CD4-positive, alpha-beta memory T cell (primary cell): ENCODE measurements at regions of chr1 and their contacts with region 1.

Region 1: DNA sequence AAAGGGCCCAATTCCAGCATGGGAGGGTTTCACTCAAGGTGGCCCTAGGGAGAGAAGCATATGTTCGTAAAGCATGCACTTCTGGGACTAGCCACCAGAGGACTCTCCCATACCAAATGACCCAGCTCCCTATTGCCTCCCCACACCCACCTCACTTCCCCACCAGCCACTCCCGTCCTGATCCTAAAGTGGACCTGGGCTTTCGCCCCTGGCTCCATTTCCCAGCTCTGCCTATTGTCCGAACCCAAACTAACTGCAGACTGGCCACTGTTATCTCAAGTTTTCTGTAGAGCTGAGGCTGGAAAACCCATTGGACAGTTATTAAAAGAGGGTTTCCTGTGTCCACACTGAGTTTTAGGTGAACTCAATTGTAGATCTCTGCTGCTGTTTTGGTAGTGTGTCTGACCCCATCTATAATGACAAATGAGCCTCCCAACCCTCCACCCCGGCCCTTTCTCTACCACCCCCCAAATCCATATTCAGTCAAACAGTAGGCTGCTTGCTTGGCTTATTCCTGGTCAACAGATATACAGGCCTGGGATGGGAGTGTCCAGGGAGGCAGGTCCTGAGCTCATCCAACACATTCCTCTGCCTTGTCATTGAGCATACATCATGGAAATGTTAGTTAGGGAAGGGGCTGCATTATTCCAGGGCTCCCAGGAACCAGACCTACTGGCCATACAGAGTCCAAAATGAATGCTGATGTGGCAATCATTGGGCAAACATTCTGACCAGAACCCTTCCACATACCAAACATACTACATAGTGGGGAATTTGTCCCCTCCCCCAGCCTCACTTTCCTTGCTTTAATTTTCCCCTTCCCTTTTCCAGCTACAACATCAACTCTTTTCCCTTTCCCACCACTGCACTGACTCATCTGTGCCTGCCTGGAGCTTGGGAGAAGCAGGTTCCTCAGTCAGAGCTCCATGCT is 59.2 kb downstream of the ABCA4 start:
- DNase-seq: peak in 1 of 5 donors; percentile 8
- H3K4me3 ChIP-seq: no peak overlapping the region
- H3K4me3 Mint-ChIP-seq: no peak overlapping the region
- H3K27ac ChIP-seq: no peak overlapping the region
- H3K27ac Mint-ChIP-seq: no peak overlapping the region
- H3K4me1 ChIP-seq: no peaks in the 10 kb centered on the region
- H3K4me1 Mint-ChIP-seq: no peaks in the 10 kb centered on the region
- H3K27me3 ChIP-seq: no peaks in the 10 kb centered on the region
- H3K27me3 Mint-ChIP-seq: peaks cover 15 to 17% of the 10 kb centered on the region in 2 donors

Region 2: DNA sequence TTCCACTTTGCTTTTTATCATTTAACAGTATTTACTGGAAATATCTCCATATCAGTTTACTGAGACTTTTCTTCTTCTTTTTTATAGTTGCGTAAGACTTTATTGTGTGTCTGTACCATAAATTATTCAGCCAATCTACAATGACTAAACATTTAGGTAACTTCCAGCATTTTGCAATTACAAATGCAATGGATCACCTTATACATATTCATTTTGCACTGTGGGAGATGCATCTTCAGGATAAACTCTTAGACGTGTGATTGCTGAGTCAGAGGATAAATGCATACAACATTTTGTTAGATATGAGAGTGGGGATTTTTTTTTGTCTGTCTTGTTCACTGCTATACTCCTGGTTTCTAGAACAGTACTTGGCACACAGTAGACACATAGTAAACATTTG is 56.9 kb before region 1 on chr1:
- CTCF ChIA-PET with region 1: no interaction called
- POLR2A ChIA-PET with region 1: no interaction called
- intact Hi-C with region 1: no loop called
- DNase-seq: no peak
- H3K4me3 ChIP-seq: no peak overlapping the region
- H3K4me3 Mint-ChIP-seq: no peak overlapping the region
- H3K27ac ChIP-seq: no peak overlapping the region
- H3K27ac Mint-ChIP-seq: no peak overlapping the region
- H3K4me1 ChIP-seq: no peaks in the 10 kb centered on the region
- H3K4me1 Mint-ChIP-seq: no peaks in the 10 kb centered on the region
- H3K27me3 ChIP-seq: no peaks in the 10 kb centered on the region
- H3K27me3 Mint-ChIP-seq: peaks cover 9 to 20% of the 10 kb centered on the region in 2 donors

Region 3: DNA sequence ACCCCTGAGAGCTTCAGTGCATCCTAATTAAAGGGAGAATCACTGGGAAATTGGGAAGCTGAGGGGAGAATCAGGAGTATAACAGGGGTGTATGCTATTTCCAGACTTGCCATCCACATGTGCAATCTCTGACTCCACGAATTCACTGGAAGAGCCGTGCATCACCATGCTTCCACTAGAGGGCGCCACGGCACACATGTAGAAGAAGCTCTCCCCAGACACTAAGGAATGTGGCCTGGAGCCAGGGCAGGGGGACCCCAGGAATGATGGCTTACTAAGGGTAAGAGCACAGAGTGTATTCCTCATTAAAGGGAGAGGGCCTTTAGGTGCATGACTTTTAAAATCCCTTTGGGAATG is 22.3 kb before region 1 on chr1:
- CTCF ChIA-PET with region 1: interaction called, 11 read pairs
- POLR2A ChIA-PET with region 1: no interaction called
- intact Hi-C with region 1: no loop called
- DNase-seq: peak in 4 of 5 donors; percentile 22 to 37 (median 25)
- H3K4me3 ChIP-seq: no peak overlapping the region
- H3K4me3 Mint-ChIP-seq: no peak overlapping the region
- H3K27ac ChIP-seq: no peak overlapping the region
- H3K27ac Mint-ChIP-seq: no peak overlapping the region
- H3K4me1 ChIP-seq: no peaks in the 10 kb centered on the region
- H3K4me1 Mint-ChIP-seq: peaks cover 0 to 2% (median 0%) of the 10 kb centered on the region in 4 donors
- H3K27me3 ChIP-seq: no peaks in the 10 kb centered on the region
- H3K27me3 Mint-ChIP-seq: peaks cover 17 to 34% of the 10 kb centered on the region in 2 donors